ENCODE measurements at regions of chr1 and their contacts with region 1.

Region 1: DNA sequence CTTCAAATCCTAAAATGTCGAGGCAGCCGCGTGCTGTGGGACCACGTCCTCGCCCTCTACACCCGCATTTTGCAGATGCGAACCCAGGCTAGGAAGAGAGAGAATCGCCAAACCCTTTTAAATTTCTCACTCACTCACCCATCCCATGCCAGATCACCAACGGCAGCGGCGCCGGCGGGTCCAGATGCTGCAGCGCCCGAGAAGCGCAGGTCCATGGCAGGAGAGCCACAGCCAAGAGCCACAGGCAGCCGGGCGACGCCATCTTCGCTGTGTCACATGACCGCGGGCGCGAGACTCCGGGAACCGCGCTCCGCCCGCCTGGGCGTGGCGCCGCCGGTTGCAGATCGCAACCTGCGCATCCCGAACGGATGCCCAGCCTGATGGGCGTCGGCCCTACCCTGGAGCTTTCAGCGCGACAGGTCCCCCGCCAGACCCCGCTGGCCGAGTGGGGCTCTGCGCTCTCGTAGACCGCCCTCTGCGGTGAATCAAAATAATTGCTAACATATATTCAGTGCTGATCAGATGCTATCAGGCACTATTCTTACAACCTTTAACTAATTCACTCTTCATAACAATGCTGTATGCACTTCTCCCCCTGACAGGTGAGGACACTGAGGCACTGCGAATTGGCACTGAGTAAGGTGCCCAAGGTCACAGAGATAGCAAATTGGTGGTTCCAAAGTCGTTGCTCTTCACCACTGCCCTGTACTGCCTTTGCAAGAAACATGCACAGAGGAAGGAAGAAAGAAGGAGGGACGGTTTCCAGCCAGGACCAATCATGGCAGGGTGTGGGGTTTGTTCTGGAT is at the start of gene PPT1:
- DNase-seq: peak; percentile 66 to 80
- H3K4me3 ChIP-seq: peak within 1 kb of the TSS; percentile 92
- H3K27ac ChIP-seq: peak within 1 kb of the TSS; percentile 40; the same call in 1 of the 2 replicates
- H3K4me1 ChIP-seq: peaks cover 47% of the 10 kb centered on the region
- H3K27me3 ChIP-seq: no peaks in the 10 kb centered on the region
- CTCF ChIP-seq: no peak
- total RNA-seq, gene PPT1: 120 and 154 TPM in 2 replicates

Region 2: GRCh38 chr1:39753132-39754025 is 343.8 kb before region 1 on chr1:
- CTCF ChIA-PET with region 1: no interaction called
- POLR2A ChIA-PET with region 1: no interaction called
- intact Hi-C with region 1: no loop called
- DNase-seq: no peak
- H3K4me3 ChIP-seq: no peak overlapping the region
- H3K27ac ChIP-seq: no peak overlapping the region
- H3K4me1 ChIP-seq: no peaks in the 10 kb centered on the region
- H3K27me3 ChIP-seq: no peaks in the 10 kb centered on the region
- CTCF ChIP-seq: no peak

Region 3: DNA sequence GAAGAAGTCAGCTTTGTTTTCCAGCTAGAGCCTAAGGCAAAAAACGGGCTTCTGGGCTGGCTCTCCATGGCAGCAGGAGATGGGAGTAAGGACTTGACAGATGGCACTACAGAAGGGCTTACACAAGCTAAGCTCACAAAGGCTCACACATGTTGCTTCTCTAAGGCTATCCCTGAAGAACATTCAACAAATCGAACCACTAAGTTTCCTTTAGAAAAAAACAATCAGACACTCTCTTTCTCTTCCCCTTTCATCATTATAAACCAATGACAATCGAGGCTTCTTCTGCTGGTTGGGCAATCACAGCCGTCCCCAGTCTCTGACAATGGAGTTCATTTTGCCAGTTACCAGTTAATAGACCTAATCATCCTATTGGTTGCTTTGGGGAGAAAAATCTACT is 254.3 kb before region 1 on chr1:
- CTCF ChIA-PET with region 1: no interaction called
- POLR2A ChIA-PET with region 1: no interaction called
- intact Hi-C with region 1: no loop called
- DNase-seq: no peak
- H3K4me3 ChIP-seq: no peak overlapping the region
- H3K27ac ChIP-seq: no peak overlapping the region
- H3K4me1 ChIP-seq: no peaks in the 10 kb centered on the region
- H3K27me3 ChIP-seq: no peaks in the 10 kb centered on the region
- CTCF ChIP-seq: no peak

Region 4: GRCh38 chr1:42047508-42047880 is 1950.3 kb after region 1 on chr1:
- CTCF ChIA-PET with region 1: no interaction called
- POLR2A ChIA-PET with region 1: interaction called, 19 read pairs
- intact Hi-C with region 1: no loop called
- DNase-seq: no peak
- H3K4me3 ChIP-seq: no peak overlapping the region
- H3K27ac ChIP-seq: no peak overlapping the region
- H3K4me1 ChIP-seq: no peaks in the 10 kb centered on the region
- H3K27me3 ChIP-seq: no peaks in the 10 kb centered on the region
- CTCF ChIP-seq: no peak

Measured in PC-9 (cell line).